CD4-positive, alpha-beta T cell (primary cell): ENCODE measurements at regions of chr11 and their contacts with region 1.

Region 1: GRCh38 chr11:121451986-121452608 is at the start of gene SORL1:
- DNase-seq: peak; percentile 64 to 89 (median 76)
- ATAC-seq: peak; percentile 57
- H3K4me3 ChIP-seq: peak within 1 kb of the TSS; percentile 90
- H3K4me3 Mint-ChIP-seq: peak within 1 kb of the TSS; percentile 95
- H3K27ac ChIP-seq: peak within 1 kb of the TSS; percentile 68 to 88
- H3K27ac Mint-ChIP-seq: peak within 1 kb of the TSS; percentile 93
- H3K4me1 ChIP-seq: peaks cover 81% of the 10 kb centered on the region
- H3K4me1 Mint-ChIP-seq: peaks cover 87% of the 10 kb centered on the region
- H3K27me3 ChIP-seq: no peaks in the 10 kb centered on the region
- H3K27me3 Mint-ChIP-seq: no peaks in the 10 kb centered on the region
- CTCF ChIP-seq: peak; percentile 53
- total RNA-seq, gene SORL1: 235 to 241 TPM

Region 2: GRCh38 chr11:120295084-120295483 is 1157.0 kb before region 1 on chr11:
- CTCF ChIA-PET with region 1: no interaction called
- POLR2A ChIA-PET with region 1: no interaction called
- intact Hi-C with region 1: no loop called
- DNase-seq: no peak
- ATAC-seq: no peak
- H3K4me3 ChIP-seq: no peak overlapping the region
- H3K4me3 Mint-ChIP-seq: no peak overlapping the region
- H3K27ac ChIP-seq: no peak overlapping the region
- H3K27ac Mint-ChIP-seq: no peak overlapping the region
- H3K4me1 ChIP-seq: no peaks in the 10 kb centered on the region
- H3K4me1 Mint-ChIP-seq: no peaks in the 10 kb centered on the region
- H3K27me3 ChIP-seq: peaks cover 12 to 23% of the 10 kb centered on the region in 2 experiments
- H3K27me3 Mint-ChIP-seq: peaks cover 53% of the 10 kb centered on the region
- CTCF ChIP-seq: no peak

Region 3: GRCh38 chr11:121282886-121283502 is 169.1 kb before region 1 on chr11:
- CTCF ChIA-PET with region 1: no interaction called
- POLR2A ChIA-PET with region 1: no interaction called
- intact Hi-C with region 1: no loop called
- DNase-seq: no peak
- ATAC-seq: no peak
- H3K4me3 ChIP-seq: no peak overlapping the region
- H3K4me3 Mint-ChIP-seq: no peak overlapping the region
- H3K27ac ChIP-seq: no peak overlapping the region
- H3K27ac Mint-ChIP-seq: no peak overlapping the region
- H3K4me1 ChIP-seq: no peaks in the 10 kb centered on the region
- H3K4me1 Mint-ChIP-seq: no peaks in the 10 kb centered on the region
- H3K27me3 ChIP-seq: peaks cover 2 to 9% of the 10 kb centered on the region in 2 experiments
- H3K27me3 Mint-ChIP-seq: peaks cover 40% of the 10 kb centered on the region
- CTCF ChIP-seq: no peak

Region 4: DNA sequence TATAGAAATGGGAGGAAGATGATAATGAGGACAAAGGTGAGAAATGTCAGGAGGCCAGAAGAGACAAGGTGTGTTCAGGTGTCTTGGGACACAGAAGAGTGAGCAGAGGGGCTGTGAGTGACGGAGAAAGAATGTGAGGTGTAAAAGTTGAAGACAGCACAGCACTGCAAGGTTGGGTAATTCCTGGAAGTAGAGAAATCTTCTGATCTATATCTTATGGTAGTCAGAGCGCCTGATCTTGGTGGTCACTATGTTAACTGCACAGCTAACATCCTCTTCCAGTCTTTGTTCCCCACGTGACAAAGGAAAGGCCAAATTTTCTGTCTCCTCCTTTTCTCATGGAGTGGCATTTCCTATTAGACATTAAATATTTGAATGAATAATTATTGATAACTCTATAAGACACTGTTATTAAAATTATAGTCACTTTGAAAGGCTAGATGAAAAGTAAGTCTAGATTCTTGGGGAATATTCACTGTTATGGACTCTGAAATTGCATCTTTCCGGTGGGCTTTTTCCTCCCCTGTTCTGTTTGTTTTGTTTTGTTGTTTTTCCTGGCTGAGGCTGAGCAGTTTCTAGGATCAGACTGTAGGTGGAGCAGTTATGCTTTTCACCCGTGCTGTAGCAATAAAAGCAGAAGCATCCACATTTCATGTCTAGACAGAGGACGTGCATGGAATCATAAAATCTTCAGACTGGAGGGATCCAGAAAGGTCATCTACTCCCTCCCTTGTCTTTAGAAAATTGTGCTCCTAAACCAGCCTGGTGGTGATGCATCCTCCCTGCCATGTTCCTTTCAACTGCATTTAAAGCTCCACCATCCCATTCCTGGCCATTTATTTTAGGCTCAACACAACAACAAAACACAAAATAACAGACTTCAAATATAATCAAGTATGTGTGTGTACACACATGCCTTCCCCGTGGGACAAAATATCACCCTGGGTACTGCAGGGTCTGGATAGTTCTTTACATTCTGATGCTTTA is 133.0 kb before region 1 on chr11:
- CTCF ChIA-PET with region 1: interaction called, 3 read pairs
- POLR2A ChIA-PET with region 1: interaction called, 21 read pairs
- intact Hi-C with region 1: loop called (anchors 5 kb)
- DNase-seq: peak in 7 of 14 experiments; percentile 10 to 73 (median 44)
- ATAC-seq: peak; percentile 85
- H3K4me3 ChIP-seq: no peak overlapping the region
- H3K4me3 Mint-ChIP-seq: no peak overlapping the region
- H3K27ac ChIP-seq: no peak overlapping the region
- H3K27ac Mint-ChIP-seq: no peak overlapping the region
- H3K4me1 ChIP-seq: peaks cover 6% of the 10 kb centered on the region
- H3K4me1 Mint-ChIP-seq: peaks cover 22% of the 10 kb centered on the region
- H3K27me3 ChIP-seq: no peaks in the 10 kb centered on the region
- H3K27me3 Mint-ChIP-seq: no peaks in the 10 kb centered on the region
- CTCF ChIP-seq: peak; percentile 86

Region 5: GRCh38 chr11:121372671-121373429 is 79.2 kb before region 1 on chr11:
- CTCF ChIA-PET with region 1: no interaction called
- POLR2A ChIA-PET with region 1: interaction called, 63 read pairs
- intact Hi-C with region 1: loop called in 1 of 2 experiments (anchors 5 kb)
- DNase-seq: peak in 4 of 14 experiments; percentile 31 to 38 (median 34)
- ATAC-seq: no peak
- H3K4me3 ChIP-seq: peak overlapping the region; percentile 3
- H3K4me3 Mint-ChIP-seq: peak overlapping the region; percentile 25
- H3K27ac ChIP-seq: peak overlapping the region in 1 of 2 donors; percentile 41
- H3K27ac Mint-ChIP-seq: peak overlapping the region; percentile 65
- H3K4me1 ChIP-seq: peaks cover 45% of the 10 kb centered on the region
- H3K4me1 Mint-ChIP-seq: peaks cover 77% of the 10 kb centered on the region
- H3K27me3 ChIP-seq: no peaks in the 10 kb centered on the region
- H3K27me3 Mint-ChIP-seq: no peaks in the 10 kb centered on the region
- CTCF ChIP-seq: no peak

Region 6: DNA sequence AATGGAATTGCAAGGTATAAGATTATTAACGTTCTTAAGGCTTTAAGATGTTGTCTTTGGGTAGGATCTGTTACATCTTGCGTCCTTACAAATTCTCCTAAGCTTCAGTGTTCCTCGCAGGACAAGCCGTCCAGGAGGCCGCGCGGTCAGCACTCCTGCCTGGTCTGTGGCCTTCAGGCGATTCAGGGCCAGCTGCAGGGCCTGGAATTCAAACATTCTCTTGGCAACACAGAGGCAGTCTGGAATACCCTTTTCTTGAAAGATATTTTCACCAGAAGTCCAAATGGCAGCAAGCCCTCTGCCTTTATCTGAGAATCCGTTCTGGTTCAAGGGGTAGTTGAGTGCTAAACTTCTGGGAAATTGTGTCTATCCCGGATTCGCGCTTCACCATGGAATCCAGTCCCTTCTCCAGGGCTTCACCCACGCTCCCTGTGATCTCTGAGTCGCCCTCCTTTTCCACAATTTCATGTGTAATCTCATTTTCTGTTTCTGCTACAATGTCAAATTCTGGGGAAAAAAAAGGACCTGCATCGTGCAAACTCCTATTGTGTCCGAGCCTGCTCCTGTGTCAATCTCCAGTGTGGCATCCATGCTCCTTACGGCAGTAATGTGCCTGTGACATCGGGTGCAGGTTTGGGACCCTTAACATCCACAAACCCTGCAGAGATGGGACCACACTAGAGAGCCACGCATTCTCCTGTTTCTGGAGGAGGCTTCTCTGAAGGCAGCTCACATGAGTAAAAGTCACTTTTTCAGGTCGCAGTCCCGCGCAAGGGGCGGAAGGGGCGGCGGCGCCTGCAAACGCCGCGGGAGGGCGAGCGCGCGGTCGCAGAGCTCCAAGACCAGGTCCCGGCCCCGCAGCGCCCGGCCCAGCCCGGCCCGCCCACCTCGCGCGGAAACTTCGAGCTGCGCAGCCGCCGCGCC is 25.4 kb before region 1 on chr11:
- CTCF ChIA-PET with region 1: interaction called, 4 read pairs
- POLR2A ChIA-PET with region 1: interaction called, 128 read pairs
- intact Hi-C with region 1: loop called in 1 of 2 experiments (anchors 2 kb)
- DNase-seq: peak in 13 of 14 experiments; percentile 9 to 72 (median 48)
- ATAC-seq: peak; percentile 70
- H3K4me3 ChIP-seq: peak overlapping the region; percentile 43
- H3K4me3 Mint-ChIP-seq: peak overlapping the region; percentile 83
- H3K27ac ChIP-seq: no peak overlapping the region
- H3K27ac Mint-ChIP-seq: peak overlapping the region; percentile 29
- H3K4me1 ChIP-seq: peaks cover 27% of the 10 kb centered on the region
- H3K4me1 Mint-ChIP-seq: peaks cover 59% of the 10 kb centered on the region
- H3K27me3 ChIP-seq: no peaks in the 10 kb centered on the region
- H3K27me3 Mint-ChIP-seq: no peaks in the 10 kb centered on the region
- CTCF ChIP-seq: no peak

Region 7: GRCh38 chr11:121464352-121464946 is 12.4 kb after region 1 on chr11:
- CTCF ChIA-PET with region 1: interaction called, 75 read pairs
- POLR2A ChIA-PET with region 1: interaction called, 326 read pairs
- intact Hi-C with region 1: loop called (anchors 1 to 2 kb)
- DNase-seq: peak; percentile 40 to 86 (median 70)
- ATAC-seq: peak; percentile 67
- H3K4me3 ChIP-seq: peak overlapping the region; percentile 26
- H3K4me3 Mint-ChIP-seq: peak overlapping the region; percentile 64
- H3K27ac ChIP-seq: peak overlapping the region; percentile 66 to 70
- H3K27ac Mint-ChIP-seq: peak overlapping the region; percentile 93
- H3K4me1 ChIP-seq: peaks cover 96% of the 10 kb centered on the region
- H3K4me1 Mint-ChIP-seq: peaks cover 98% of the 10 kb centered on the region
- H3K27me3 ChIP-seq: no peaks in the 10 kb centered on the region
- H3K27me3 Mint-ChIP-seq: no peaks in the 10 kb centered on the region
- CTCF ChIP-seq: no peak

Region 8: GRCh38 chr11:121534131-121535093 is 82.3 kb after region 1 on chr11:
- CTCF ChIA-PET with region 1: no interaction called
- POLR2A ChIA-PET with region 1: interaction called, 4 read pairs
- intact Hi-C with region 1: loop called (anchors 5 kb)
- DNase-seq: no peak
- ATAC-seq: no peak
- H3K4me3 ChIP-seq: no peak overlapping the region
- H3K4me3 Mint-ChIP-seq: no peak overlapping the region
- H3K27ac ChIP-seq: peak overlapping the region in 1 of 2 donors; percentile 1
- H3K27ac Mint-ChIP-seq: peak overlapping the region; percentile 53
- H3K4me1 ChIP-seq: no peaks in the 10 kb centered on the region
- H3K4me1 Mint-ChIP-seq: peaks cover 64% of the 10 kb centered on the region
- H3K27me3 ChIP-seq: no peaks in the 10 kb centered on the region
- H3K27me3 Mint-ChIP-seq: no peaks in the 10 kb centered on the region
- CTCF ChIP-seq: no peak

Region 9: DNA sequence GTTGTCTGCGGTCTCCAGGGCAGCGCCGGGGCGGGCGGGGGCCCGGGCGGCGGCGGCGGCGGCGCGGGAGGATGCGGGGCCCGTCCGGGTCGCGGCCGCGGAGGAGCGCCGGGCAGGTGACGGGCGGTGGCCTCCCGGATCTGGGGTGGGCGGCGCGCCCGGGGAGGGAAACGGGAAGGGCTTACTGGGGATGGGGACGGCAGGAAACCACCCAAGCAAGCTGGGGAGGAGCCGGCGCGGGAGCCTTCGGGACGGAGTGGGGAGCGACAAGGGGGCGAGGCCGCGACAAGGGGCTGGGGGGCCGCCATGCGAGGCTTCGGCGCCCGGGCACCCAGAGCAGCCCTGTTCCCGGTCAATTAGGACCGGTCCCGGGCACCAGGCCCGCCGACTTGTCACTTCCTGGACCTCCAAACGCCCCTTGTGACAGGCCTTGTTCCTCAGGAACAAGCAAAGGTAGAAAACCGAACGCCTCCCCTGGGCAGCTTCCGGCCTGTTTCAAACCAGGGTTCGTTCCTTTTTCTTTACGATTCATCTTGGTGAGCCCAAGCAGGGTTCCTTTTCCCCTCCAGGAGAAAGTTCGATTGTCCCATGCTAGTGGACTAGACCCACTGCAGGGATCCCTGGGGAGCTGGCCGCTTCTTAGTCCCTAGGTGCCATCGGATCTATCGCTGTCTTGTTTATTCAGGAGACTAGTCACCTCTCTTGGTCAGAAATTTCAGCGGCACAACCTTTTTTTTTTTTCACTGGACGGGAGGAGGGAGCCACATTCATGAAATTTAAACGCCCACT is 1431.0 kb after region 1 on chr11:
- CTCF ChIA-PET with region 1: no interaction called
- POLR2A ChIA-PET with region 1: no interaction called
- intact Hi-C with region 1: no loop called
- DNase-seq: peak; percentile 5 to 76 (median 48)
- ATAC-seq: peak; percentile 81
- H3K4me3 ChIP-seq: peak overlapping the region; percentile 78
- H3K4me3 Mint-ChIP-seq: peak overlapping the region; percentile 89
- H3K27ac ChIP-seq: peak overlapping the region; percentile 42 to 83
- H3K27ac Mint-ChIP-seq: peak overlapping the region; percentile 75
- H3K4me1 ChIP-seq: peaks cover 17% of the 10 kb centered on the region
- H3K4me1 Mint-ChIP-seq: peaks cover 38% of the 10 kb centered on the region
- H3K27me3 ChIP-seq: no peaks in the 10 kb centered on the region
- H3K27me3 Mint-ChIP-seq: no peaks in the 10 kb centered on the region
- CTCF ChIP-seq: no peak